Natural killer cell (primary cell): ENCODE measurements at regions of chr2 and their contacts with region 1.

Region 1: DNA sequence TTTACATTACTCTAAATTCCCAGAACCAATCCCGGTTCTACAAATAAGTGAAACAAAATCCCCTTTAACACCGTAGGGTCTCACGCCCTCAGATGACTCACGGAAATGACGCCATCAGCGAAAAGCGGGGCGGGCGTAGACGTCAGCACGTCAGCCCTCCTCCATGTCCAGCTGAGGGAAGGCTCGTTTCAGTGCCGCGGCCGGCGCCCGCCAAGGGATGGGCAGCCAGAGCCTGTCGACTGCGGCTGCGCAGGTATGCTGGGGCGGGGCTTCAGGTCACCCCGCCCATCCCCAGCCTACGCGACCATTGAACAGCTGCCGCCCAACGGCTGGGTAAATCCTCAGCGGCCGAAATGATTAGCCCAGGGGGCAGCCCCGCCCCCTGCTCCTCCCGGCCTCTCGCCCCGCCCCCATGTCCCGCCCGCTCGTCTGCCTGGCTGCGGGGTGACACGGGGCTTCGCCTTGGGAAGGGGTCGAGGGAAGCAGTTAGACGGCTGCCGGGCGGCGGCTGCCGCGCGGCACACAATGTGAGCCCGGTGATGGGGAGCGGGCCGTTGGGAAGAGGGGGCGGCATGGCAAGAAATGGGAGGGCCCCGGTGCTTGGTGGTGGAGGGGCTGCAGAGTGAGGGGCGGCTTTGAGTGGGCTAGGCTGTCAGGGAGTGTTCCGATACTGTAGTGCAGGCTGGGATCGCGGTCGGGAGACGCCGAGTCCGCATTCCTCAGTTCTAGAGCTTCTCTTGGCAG is at the start of gene NBEAL1:
- DNase-seq: peak; percentile 98 to 99
- ATAC-seq: peak; percentile 91 to 96 (median 92)
- H3K4me3 ChIP-seq: peak within 1 kb of the TSS; percentile 84
- H3K4me3 Mint-ChIP-seq: peak within 1 kb of the TSS; percentile 98
- H3K27ac ChIP-seq: peak within 1 kb of the TSS; percentile 90
- H3K27ac Mint-ChIP-seq: peak within 1 kb of the TSS; percentile 97 to 99
- H3K4me1 ChIP-seq: peaks cover 13% of the 10 kb centered on the region
- H3K4me1 Mint-ChIP-seq: peaks cover 29 to 35% of the 10 kb centered on the region in 2 donors
- H3K27me3 ChIP-seq: peaks cover 2% of the 10 kb centered on the region
- H3K27me3 Mint-ChIP-seq: peaks cover 0 to 13% of the 10 kb centered on the region in 2 donors
- CTCF ChIP-seq: no peak
- total RNA-seq, gene NBEAL1: 12.2 to 19.7 (median 12.9) TPM

Region 2: DNA sequence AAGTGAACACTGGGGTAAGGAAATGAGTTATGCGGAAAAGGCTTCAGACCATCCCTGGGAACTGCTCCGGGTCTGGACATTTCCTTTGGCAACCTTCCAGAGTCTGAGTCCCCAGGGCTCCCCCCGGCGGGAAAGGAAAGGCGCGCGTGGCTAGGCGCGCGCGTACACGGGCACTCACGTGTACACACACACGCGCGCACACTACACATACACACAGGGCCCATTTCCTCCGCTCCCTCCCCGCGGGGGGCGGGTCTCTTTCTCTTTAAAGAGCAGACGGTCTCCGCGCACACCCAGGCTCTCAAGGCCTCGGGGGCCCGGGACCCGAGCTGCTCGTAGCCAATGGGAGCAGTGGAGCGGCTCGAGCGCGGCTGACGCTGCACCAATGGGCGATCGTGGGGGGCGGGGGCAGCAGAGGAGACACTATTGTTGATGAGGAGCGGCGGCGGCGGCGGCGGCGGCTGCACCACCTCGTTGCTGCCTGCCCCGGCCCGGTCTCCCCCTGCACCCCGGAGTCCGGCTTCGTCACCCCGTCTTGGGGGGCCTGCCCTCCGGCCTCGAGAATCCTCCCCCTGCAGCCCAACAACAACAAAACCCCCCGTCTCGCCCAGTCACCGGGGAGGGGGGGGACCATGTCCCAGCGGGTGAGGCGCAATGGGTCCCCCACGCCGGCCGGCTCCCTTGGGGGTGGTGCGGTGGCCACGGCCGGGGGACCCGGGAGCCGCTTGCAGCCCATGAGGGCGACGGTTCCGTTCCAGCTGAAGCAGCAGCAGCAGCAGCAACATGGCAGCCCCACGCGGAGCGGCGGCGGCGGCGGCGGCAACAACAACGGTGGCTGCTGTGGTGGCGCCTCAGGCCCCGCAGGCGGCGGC is 379.8 kb before region 1 on chr2 and contains the start of gene FAM117B:
- intact Hi-C with region 1: loop called (anchors 2 kb)
- DNase-seq: peak; percentile 94 to 98
- ATAC-seq: peak; percentile 90 to 96 (median 92)
- H3K4me3 ChIP-seq: peak within 1 kb of the TSS; percentile 79
- H3K4me3 Mint-ChIP-seq: peak within 1 kb of the TSS; percentile 95
- H3K27ac ChIP-seq: peak within 1 kb of the TSS; percentile 79
- H3K27ac Mint-ChIP-seq: peak within 1 kb of the TSS; percentile 93 to 98
- H3K4me1 ChIP-seq: peaks cover 13% of the 10 kb centered on the region
- H3K4me1 Mint-ChIP-seq: peaks cover 18 to 25% of the 10 kb centered on the region in 2 donors
- H3K27me3 ChIP-seq: no peaks in the 10 kb centered on the region
- H3K27me3 Mint-ChIP-seq: no peaks in the 10 kb centered on the region
- CTCF ChIP-seq: no peak
- total RNA-seq, gene FAM117B: 11.6 to 14.2 (median 13.1) TPM

Region 3: GRCh38 chr2:203061346-203061745 is 46.7 kb after region 1 on chr2:
- intact Hi-C with region 1: no loop called
- DNase-seq: no peak
- ATAC-seq: no peak
- H3K4me3 ChIP-seq: no peak overlapping the region
- H3K4me3 Mint-ChIP-seq: no peak overlapping the region
- H3K27ac ChIP-seq: no peak overlapping the region
- H3K27ac Mint-ChIP-seq: no peak overlapping the region
- H3K4me1 ChIP-seq: no peaks in the 10 kb centered on the region
- H3K4me1 Mint-ChIP-seq: no peaks in the 10 kb centered on the region
- H3K27me3 ChIP-seq: no peaks in the 10 kb centered on the region
- H3K27me3 Mint-ChIP-seq: no peaks in the 10 kb centered on the region
- CTCF ChIP-seq: no peak

Region 4: DNA sequence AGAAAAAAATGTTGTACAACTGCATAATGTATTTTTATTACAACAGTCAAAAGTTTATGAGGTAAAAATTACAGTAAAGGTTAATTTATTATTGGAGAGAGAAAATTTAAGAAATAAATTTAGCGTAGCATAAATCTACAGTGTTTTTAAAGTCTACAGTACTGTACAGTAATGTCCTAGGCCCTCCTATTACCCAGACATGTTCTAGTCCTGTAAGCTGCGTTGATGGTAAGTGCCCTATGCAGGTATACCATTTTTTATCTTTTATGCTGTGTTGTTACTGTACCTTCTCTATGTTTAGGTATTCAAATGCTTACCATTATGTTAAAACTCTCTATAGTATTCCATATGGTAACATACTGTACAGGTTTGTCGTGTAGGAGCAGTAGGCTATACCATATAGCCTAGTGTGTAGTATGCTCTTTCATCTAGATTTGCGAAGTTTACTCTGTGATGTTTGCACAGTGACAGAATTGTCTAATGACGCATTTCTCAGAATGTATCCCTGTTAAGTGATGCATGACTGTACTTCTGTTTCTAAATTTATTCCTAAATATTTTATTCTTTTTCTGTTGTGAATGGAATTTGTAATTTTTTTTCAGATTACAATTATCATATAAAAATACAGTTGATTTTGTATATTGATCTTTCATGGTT is 338.1 kb after region 1 on chr2:
- intact Hi-C with region 1: no loop called
- DNase-seq: no peak
- ATAC-seq: no peak
- H3K4me3 ChIP-seq: no peak overlapping the region
- H3K4me3 Mint-ChIP-seq: no peak overlapping the region
- H3K27ac ChIP-seq: no peak overlapping the region
- H3K27ac Mint-ChIP-seq: no peak overlapping the region
- H3K4me1 ChIP-seq: no peaks in the 10 kb centered on the region
- H3K4me1 Mint-ChIP-seq: peaks cover 0 to 5% of the 10 kb centered on the region in 2 donors
- H3K27me3 ChIP-seq: no peaks in the 10 kb centered on the region
- H3K27me3 Mint-ChIP-seq: no peaks in the 10 kb centered on the region
- CTCF ChIP-seq: no peak